ENCODE measurements at regions of chr5 and their contacts with region 1.

Region 1: GRCh38 chr5:127925916-127926315 is 157.7 kb upstream of the SLC12A2 start:
- DNase-seq: no peak
- ATAC-seq: no peak
- H3K4me3 ChIP-seq: no peak overlapping the region
- H3K27ac ChIP-seq: no peak overlapping the region
- H3K4me1 ChIP-seq: peaks cover 3% of the 10 kb centered on the region
- H3K27me3 ChIP-seq: no peaks in the 10 kb centered on the region
- CTCF ChIP-seq: no peak
- POLR2A ChIP-seq: no peak
- RAD21 ChIP-seq: no peak

Region 2: DNA sequence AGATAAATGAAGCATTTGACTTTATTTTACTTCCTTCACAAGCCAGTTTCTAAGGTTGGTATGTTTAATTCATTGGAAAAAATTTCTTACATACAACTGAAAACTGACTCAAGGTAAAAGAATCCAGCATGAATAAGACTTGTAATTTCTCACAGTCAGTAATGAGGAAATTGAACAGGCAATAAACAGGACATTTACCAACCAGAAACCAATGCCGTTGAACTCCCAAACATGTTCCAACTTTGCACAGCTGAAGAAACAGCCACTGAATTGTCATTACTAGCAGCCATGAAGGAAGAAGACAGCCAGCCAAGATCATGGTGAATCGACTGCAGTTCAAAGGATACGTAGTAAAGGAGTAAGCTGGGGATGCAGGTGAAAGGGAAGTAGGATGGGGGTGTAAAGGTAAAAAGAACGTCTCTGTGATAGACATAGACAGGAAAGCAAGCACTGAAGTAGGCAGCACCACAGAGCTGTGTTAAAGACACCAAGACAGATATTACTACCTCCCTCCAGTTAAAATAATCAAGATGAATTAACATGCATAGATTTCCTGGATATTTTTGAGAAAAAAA is 136.3 kb after region 1 on chr5:
- CTCF ChIA-PET with region 1: no interaction called
- POLR2A ChIA-PET with region 1: no interaction called
- dilution Hi-C with region 1: no loop called
- in situ Hi-C with region 1: no loop called
- intact Hi-C with region 1: loop called (anchors 5 kb)
- DNase-seq: peak; percentile 80
- ATAC-seq: peak; percentile 89
- H3K4me3 ChIP-seq: no peak overlapping the region
- H3K27ac ChIP-seq: peak overlapping the region; percentile 6; the same call in 1 of the 2 replicates
- H3K4me1 ChIP-seq: peaks cover 3% of the 10 kb centered on the region
- H3K27me3 ChIP-seq: no peaks in the 10 kb centered on the region
- CTCF ChIP-seq: no peak
- POLR2A ChIP-seq: no peak
- RAD21 ChIP-seq: no peak

Measured in IMR-90 (cell line).